Heart right ventricle (tissue), 16 donors: ENCODE measurements at regions of chr1 and their contacts with region 1.

Region 1: GRCh38 chr1:63691701-63692425 is 82.0 kb upstream of the ROR1 start:
- DNase-seq: peak in 1 of 2 donors; percentile 65
- ATAC-seq: peak; percentile 69 to 93 (median 87)
- H3K4me3 ChIP-seq: no peak overlapping the region
- H3K27ac ChIP-seq: peak overlapping the region in 6 of 10 donors; percentile 2 to 67 (median 28)
- H3K4me1 ChIP-seq: peaks cover 3 to 18% (median 9%) of the 10 kb centered on the region in 9 donors
- H3K27me3 ChIP-seq: no peaks in the 10 kb centered on the region
- CTCF ChIP-seq: peak; percentile 40 to 80 (median 75)

Region 2: DNA sequence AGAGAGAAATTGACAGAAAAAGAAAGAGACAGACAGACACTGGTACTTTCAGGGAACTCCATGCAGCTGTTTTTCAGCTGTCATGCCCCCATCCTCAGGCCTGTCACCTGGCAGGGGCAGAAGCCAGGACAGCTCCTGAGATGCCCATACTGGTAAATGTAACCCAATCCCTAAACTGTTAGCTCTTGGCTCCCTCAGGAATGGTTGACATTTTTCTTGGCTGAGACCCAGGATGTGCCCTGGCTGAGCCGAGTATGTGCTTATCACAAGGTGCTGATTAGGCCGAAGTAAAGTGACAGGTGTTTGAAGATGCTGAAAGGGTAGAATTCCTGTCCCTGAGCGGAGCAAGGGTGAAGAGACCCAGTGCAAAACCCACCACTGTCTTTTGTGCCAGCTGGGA is 47.9 kb before region 1 on chr1:
- intact Hi-C with region 1: no loop called
- DNase-seq: peak; percentile 23 to 55
- ATAC-seq: peak; percentile 34 to 92 (median 82)
- H3K4me3 ChIP-seq: no peak overlapping the region
- H3K27ac ChIP-seq: peak overlapping the region in 9 of 10 donors; percentile 27 to 76 (median 63)
- H3K4me1 ChIP-seq: peaks cover 0 to 37% (median 30%) of the 10 kb centered on the region in 9 donors
- H3K27me3 ChIP-seq: no peaks in the 10 kb centered on the region
- CTCF ChIP-seq: no peak

Region 3: GRCh38 chr1:63868268-63868781 is 176.5 kb after region 1 on chr1:
- intact Hi-C with region 1: loop called in 1 of 10 experiments (anchors 10 kb)
- DNase-seq: no peak
- ATAC-seq: peak in 5 of 8 donors; percentile 40 to 65 (median 54)
- H3K4me3 ChIP-seq: no peak overlapping the region
- H3K27ac ChIP-seq: peak overlapping the region in 2 of 10 donors; percentile 2 to 18
- H3K4me1 ChIP-seq: peaks cover 0 to 55% (median 6%) of the 10 kb centered on the region in 9 donors
- H3K27me3 ChIP-seq: no peaks in the 10 kb centered on the region
- CTCF ChIP-seq: peak in 3 of 9 donors; percentile 15 to 36 (median 31)

Region 4: GRCh38 chr1:63917571-63918417 is 225.9 kb after region 1 on chr1:
- intact Hi-C with region 1: loop called in 5 of 10 experiments (anchors 10 kb)
- DNase-seq: no peak
- ATAC-seq: no peak
- H3K4me3 ChIP-seq: no peak overlapping the region
- H3K27ac ChIP-seq: no peak overlapping the region
- H3K4me1 ChIP-seq: peaks cover 8 to 75% (median 42%) of the 10 kb centered on the region in 9 donors
- H3K27me3 ChIP-seq: no peaks in the 10 kb centered on the region
- CTCF ChIP-seq: peak in 2 of 9 donors; percentile 17 to 22

Region 5: GRCh38 chr1:63935143-63935542 is 243.3 kb after region 1 on chr1:
- intact Hi-C with region 1: loop called in 1 of 10 experiments (anchors 10 kb)
- DNase-seq: no peak
- ATAC-seq: peak in 7 of 8 donors; percentile 54 to 86 (median 74)
- H3K4me3 ChIP-seq: no peak overlapping the region
- H3K27ac ChIP-seq: peak overlapping the region in 5 of 10 donors; percentile 10 to 75 (median 41)
- H3K4me1 ChIP-seq: peaks cover 0 to 44% (median 15%) of the 10 kb centered on the region in 9 donors
- H3K27me3 ChIP-seq: no peaks in the 10 kb centered on the region
- CTCF ChIP-seq: peak in 7 of 9 donors; percentile 8 to 53 (median 41)

Region 6: GRCh38 chr1:64038965-64039926 is 347.4 kb after region 1 on chr1:
- intact Hi-C with region 1: loop called in 4 of 10 experiments (anchors 5 to 10 kb)
- DNase-seq: peak in 1 of 2 donors; percentile 43
- ATAC-seq: peak; percentile 48 to 80 (median 59)
- H3K4me3 ChIP-seq: no peak overlapping the region
- H3K27ac ChIP-seq: peak overlapping the region in 8 of 10 donors; percentile 18 to 74 (median 58)
- H3K4me1 ChIP-seq: peaks cover 8 to 74% (median 38%) of the 10 kb centered on the region in 9 donors
- H3K27me3 ChIP-seq: no peaks in the 10 kb centered on the region
- CTCF ChIP-seq: no peak

Region 7: GRCh38 chr1:64155278-64155677 is 463.4 kb after region 1 on chr1:
- intact Hi-C with region 1: loop called in 1 of 10 experiments (anchors 10 kb)
- DNase-seq: no peak
- ATAC-seq: no peak
- H3K4me3 ChIP-seq: no peak overlapping the region
- H3K27ac ChIP-seq: no peak overlapping the region
- H3K4me1 ChIP-seq: no peaks in the 10 kb centered on the region
- H3K27me3 ChIP-seq: no peaks in the 10 kb centered on the region
- CTCF ChIP-seq: no peak